Activated naive CD4-positive, alpha-beta T cell treated with anti-CD3 and anti-CD28 coated beads, Interleukin-2, amount 10 ng/mL, durations not matched to agents 7 days and 5 days (primary cell): ENCODE measurements at regions of chr6 and their contacts with region 1.

Region 1: GRCh38 chr6:31795616-31796298 is at the start of gene VARS1:
- DNase-seq: peak; percentile 89
- H3K4me3 Mint-ChIP-seq: peak within 1 kb of the TSS; percentile 98
- H3K27ac Mint-ChIP-seq: peak within 1 kb of the TSS; percentile 96
- H3K4me1 Mint-ChIP-seq: peaks cover 50% of the 10 kb centered on the region
- H3K27me3 Mint-ChIP-seq: no peaks in the 10 kb centered on the region

Region 2: GRCh38 chr6:31419842-31420241 is 375.9 kb before region 1 on chr6:
- CTCF ChIA-PET with region 1: no interaction called
- DNase-seq: no peak
- H3K4me3 Mint-ChIP-seq: no peak overlapping the region
- H3K27ac Mint-ChIP-seq: no peak overlapping the region
- H3K4me1 Mint-ChIP-seq: no peaks in the 10 kb centered on the region
- H3K27me3 Mint-ChIP-seq: peaks cover 16% of the 10 kb centered on the region

Region 3: DNA sequence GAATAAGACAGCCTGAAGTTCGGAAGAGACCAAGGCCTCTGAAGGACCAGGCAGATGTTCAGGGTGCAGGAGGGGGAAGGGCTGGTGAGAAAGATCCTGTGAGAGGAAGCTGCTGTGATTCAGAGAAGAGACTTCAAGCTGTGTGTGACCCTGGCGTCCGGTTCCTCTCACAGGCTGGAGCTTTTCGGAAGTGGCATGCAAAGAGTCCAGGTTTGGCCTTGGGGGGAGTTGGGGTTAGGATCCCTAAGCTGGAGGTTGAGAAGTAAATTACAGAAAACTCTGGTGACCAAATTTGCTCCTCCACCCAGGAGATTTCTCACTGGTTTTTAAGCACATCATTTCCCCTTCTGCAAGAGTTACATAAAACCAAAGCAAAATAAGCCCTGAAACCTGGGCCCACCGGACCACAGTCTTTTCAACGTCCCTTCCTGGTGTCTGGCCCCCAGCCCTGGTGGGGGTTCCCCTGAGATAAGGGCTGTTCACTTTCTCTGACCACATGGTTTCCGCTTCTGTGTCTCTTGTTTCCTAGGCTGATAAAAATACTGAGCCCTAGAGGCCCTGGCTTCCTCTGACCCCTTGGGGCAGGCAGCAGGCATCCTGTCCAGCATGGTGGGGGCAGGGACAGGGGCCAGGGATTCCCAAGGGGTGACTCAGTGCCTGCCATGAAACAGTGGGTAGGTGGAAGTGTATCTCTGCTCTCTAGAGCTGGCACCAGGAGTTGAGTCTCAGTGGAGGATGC is 235.6 kb before region 1 on chr6:
- CTCF ChIA-PET with region 1: no interaction called
- DNase-seq: peak; percentile 69
- H3K4me3 Mint-ChIP-seq: peak overlapping the region; percentile 63
- H3K27ac Mint-ChIP-seq: peak overlapping the region; percentile 91
- H3K4me1 Mint-ChIP-seq: peaks cover 70% of the 10 kb centered on the region
- H3K27me3 Mint-ChIP-seq: peaks cover 24% of the 10 kb centered on the region

Region 4: GRCh38 chr6:31580807-31581433 is 214.8 kb before region 1 on chr6:
- CTCF ChIA-PET with region 1: no interaction called
- DNase-seq: peak; percentile 90
- H3K4me3 Mint-ChIP-seq: peak overlapping the region; percentile 93
- H3K27ac Mint-ChIP-seq: peak overlapping the region; percentile 97
- H3K4me1 Mint-ChIP-seq: peaks cover 70% of the 10 kb centered on the region
- H3K27me3 Mint-ChIP-seq: no peaks in the 10 kb centered on the region

Region 5: DNA sequence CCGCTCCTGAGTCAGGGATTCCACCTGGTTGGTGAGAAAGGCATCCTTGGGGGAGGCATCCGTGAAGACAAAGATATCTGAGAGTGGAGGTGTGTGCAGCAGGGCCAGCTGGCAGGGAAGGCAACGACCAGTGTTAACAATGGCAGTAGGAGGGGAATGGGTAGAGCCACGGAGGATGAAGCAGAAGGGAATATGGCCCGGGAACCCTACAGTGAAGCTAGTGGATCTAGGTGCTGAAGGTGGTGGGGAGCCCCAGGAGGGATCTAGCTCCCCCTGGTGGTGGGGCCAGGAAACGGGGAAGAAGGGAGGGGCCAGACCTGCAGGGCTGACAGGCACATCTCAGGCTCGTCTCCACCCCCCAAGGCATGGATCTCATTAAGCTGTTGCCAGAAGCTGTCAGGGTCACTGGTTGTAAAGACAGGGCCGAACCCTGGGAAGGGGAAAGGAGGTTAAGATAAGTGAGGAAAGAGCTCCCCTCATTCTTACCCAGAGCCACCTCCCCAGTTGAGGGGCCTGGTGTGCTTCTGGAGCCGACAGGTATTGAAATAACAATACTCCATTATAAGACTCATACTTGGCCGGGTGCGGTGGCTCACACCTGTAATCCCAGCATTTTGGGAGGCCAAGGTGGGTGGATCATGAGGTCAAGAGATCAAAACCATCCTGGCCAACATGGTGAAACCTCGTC is 25.9 kb before region 1 on chr6:
- CTCF ChIA-PET with region 1: interaction called, 11 read pairs
- DNase-seq: peak; percentile 86
- H3K4me3 Mint-ChIP-seq: no peak overlapping the region
- H3K27ac Mint-ChIP-seq: peak overlapping the region; percentile 61
- H3K4me1 Mint-ChIP-seq: peaks cover 52% of the 10 kb centered on the region
- H3K27me3 Mint-ChIP-seq: no peaks in the 10 kb centered on the region

Region 6: GRCh38 chr6:31776989-31777666 is 18.6 kb before region 1 on chr6 and contains the start of gene VWA7:
- CTCF ChIA-PET with region 1: interaction called, 11 read pairs
- DNase-seq: peak; percentile 79
- H3K4me3 Mint-ChIP-seq: peak within 1 kb of the TSS; percentile 23
- H3K27ac Mint-ChIP-seq: peak within 1 kb of the TSS; percentile 82
- H3K4me1 Mint-ChIP-seq: peaks cover 45% of the 10 kb centered on the region
- H3K27me3 Mint-ChIP-seq: peaks cover 5% of the 10 kb centered on the region

Region 7: GRCh38 chr6:31806465-31807272 is 10.9 kb after region 1 on chr6 and contains the start of gene LSM2:
- CTCF ChIA-PET with region 1: interaction called, 20 read pairs
- DNase-seq: peak; percentile 98
- H3K4me3 Mint-ChIP-seq: peak within 1 kb of the TSS; percentile 92
- H3K27ac Mint-ChIP-seq: peak within 1 kb of the TSS; percentile 89
- H3K4me1 Mint-ChIP-seq: peaks cover 42% of the 10 kb centered on the region
- H3K27me3 Mint-ChIP-seq: no peaks in the 10 kb centered on the region

Region 8: DNA sequence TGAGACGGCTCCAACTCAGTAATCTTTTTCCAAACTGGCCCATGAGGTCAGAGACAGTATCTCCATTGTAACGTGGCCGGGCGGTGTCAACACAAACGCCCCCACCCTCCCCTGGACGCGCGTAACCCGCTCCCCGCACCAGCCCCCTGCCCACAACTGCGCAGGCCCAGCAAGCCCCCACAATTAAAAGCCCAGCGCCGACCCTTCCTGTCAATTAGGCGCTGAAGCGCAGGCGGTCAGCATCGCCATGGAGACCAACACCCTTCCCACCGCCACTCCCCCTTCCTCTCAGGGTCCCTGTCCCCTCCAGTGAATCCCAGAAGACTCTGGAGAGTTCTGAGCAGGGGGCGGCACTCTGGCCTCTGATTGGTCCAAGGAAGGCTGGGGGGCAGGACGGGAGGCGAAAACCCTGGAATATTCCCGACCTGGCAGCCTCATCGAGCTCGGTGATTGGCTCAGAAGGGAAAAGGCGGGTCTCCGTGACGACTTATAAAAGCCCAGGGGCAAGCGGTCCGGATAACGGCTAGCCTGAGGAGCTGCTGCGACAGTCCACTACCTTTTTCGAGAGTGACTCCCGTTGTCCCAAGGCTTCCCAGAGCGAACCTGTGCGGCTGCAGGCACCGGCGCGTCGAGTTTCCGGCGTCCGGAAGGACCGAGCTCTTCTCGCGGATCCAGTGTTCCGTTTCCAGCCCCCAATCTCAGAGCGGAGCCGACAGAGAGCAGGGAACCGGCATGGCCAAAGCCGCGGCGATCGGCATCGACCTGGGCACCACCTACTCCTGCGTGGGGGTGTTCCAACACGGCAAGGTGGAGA is 19.5 kb after region 1 on chr6 and contains the starts of genes HSPA1A and HSPA1L:
- CTCF ChIA-PET with region 1: interaction called, 10 read pairs
- DNase-seq: peak; percentile 77
- H3K4me3 Mint-ChIP-seq: peak within 1 kb of the TSS; percentile 92
- H3K27ac Mint-ChIP-seq: peak within 1 kb of the TSS; percentile 91
- H3K4me1 Mint-ChIP-seq: peaks cover 49% of the 10 kb centered on the region
- H3K27me3 Mint-ChIP-seq: no peaks in the 10 kb centered on the region

Region 9: DNA sequence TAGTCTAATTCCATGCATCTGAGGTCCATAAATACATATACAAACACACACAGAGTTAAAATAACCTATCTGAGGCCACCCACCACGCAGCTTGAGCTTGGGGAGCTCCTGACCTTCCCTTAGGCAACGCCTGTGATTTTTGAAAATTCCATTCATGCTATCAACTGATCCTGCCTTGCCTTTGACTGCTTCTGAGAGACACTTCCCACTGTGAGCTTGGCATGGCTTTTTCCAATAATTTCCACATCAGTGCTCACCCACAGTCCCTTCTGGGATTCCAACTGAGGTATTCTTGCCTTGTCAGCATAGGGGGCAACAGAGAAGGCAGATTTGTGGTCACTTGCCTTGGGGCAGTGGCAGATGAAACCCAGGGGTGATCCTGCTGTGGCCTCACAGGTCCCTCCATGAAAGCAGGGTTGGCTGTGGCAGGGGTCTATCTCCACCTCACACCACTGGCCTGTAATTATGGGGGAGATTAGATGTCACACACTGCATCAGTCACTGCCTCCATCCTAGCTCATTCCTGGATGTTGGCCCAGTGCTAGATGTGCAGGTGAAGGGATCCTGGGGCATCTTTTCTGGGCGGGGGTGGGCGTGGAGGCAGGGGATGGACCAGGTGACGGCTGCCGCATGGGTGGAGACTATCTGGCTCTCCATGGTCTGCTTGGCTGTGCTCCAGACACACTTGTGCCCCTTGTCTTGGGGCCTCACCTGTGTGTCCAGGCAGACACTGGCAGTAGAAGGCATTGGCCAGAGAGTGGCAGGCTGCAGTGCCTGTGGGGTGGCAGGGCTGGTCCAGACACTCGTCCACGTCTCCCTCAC is 407.9 kb after region 1 on chr6:
- CTCF ChIA-PET with region 1: no interaction called
- DNase-seq: no peak
- H3K4me3 Mint-ChIP-seq: no peak overlapping the region
- H3K27ac Mint-ChIP-seq: no peak overlapping the region
- H3K4me1 Mint-ChIP-seq: no peaks in the 10 kb centered on the region
- H3K27me3 Mint-ChIP-seq: peaks cover 50% of the 10 kb centered on the region